PC-3 (cell line): ENCODE measurements at regions of chr15 and their contacts with region 1.

Region 1: DNA sequence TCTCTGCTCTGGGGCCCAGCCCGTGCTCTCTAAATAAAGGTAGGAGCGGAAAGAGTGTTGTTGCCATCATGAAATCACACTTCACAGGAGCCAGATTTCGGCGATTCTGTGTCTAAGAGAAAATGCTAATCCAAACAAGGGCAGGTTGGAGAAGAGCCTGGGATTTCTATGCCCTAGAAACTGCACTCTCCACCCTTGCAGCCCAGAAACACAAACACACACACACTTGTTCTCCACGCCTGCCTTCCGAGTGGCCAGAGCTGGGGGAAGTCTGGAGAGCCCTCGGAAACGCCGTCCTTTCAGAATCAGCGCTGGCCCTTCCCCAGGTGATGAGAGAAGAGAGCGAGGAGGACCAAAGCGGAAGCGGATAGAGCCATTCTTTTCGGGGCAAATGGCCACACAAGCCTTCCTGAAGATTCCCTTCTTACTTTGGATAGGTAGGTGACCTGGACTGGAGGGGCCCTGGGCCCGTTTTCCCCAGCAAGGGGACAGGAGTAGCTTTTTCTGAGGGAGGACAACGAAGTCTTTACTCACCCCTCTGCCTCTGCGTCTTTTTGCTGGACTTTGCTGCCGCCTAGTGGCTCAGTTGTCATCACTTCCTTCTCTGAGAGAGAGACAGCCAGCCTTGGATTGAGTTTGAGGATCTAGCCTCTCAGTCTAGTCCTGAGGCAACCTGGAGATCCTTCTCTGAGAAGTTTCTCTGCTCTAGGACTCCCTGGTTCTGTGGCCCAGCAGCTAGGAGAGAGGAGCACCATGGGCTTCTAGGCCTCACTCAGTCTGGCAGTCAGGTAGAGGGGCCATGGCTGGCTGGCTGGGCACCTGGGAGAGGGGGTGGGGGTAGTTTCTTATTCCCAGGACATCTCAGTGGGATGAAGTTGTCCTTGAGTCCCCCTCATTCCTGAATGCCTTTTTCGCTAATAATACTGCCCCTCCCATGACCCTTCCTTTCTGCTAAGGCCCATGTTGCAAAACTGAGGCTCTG is 37.7 kb downstream of the SENP8 start:
- DNase-seq: peak; percentile 92
- ATAC-seq: peak; percentile 94
- H3K4me3 ChIP-seq: peak overlapping the region; percentile 73
- H3K27ac ChIP-seq: no peak overlapping the region
- H3K4me1 ChIP-seq: peaks cover 12% of the 10 kb centered on the region
- H3K27me3 ChIP-seq: no peaks in the 10 kb centered on the region
- CTCF ChIP-seq: peak; percentile 93

Region 2: GRCh38 chr15:71830981-71831380 is 324.9 kb before region 1 on chr15:
- CTCF ChIA-PET with region 1: no interaction called
- POLR2A ChIA-PET with region 1: no interaction called
- intact Hi-C with region 1: loop called (anchors 10 kb)
- DNase-seq: no peak
- ATAC-seq: no peak
- H3K4me3 ChIP-seq: no peak overlapping the region
- H3K27ac ChIP-seq: no peak overlapping the region
- H3K4me1 ChIP-seq: no peaks in the 10 kb centered on the region
- H3K27me3 ChIP-seq: no peaks in the 10 kb centered on the region
- CTCF ChIP-seq: no peak